Activated CD4-positive, alpha-beta memory T cell treated with anti-CD3 and anti-CD28 coated beads for 36 hours (primary cell): ENCODE measurements at regions of chr11 and their contacts with region 1.

Region 1: GRCh38 chr11:5123802-5124521 is 14.2 kb downstream of the OR52A5 start:
- DNase-seq: peak; percentile 62
- H3K4me3 Mint-ChIP-seq: no peak overlapping the region
- H3K27ac Mint-ChIP-seq: no peak overlapping the region
- H3K4me1 Mint-ChIP-seq: no peaks in the 10 kb centered on the region
- H3K27me3 Mint-ChIP-seq: peaks cover 8% of the 10 kb centered on the region

Region 2: DNA sequence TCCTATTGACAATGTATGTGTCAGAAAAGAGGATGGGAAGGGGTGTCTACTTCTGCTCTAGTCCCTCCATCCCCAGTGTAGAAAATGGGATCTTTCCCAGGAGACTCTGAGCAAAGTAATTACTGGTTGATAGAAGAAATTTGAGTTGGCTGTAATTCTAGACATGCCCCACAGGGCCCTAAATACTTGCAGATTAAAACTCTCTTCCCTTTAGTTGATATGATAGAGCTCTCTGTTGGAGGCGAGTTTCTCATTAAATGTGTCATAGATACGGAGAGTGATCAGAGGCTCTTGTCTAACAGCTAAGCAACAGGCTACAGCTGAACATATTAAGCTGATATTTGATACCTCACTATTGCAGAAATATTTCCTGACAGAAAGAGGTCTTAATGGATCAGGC is 21.7 kb before region 1 on chr11:
- CTCF ChIA-PET with region 1: no interaction called
- POLR2A ChIA-PET with region 1: no interaction called
- intact Hi-C with region 1: no loop called
- DNase-seq: no peak
- H3K4me3 Mint-ChIP-seq: no peak overlapping the region
- H3K27ac Mint-ChIP-seq: no peak overlapping the region
- H3K4me1 Mint-ChIP-seq: no peaks in the 10 kb centered on the region
- H3K27me3 Mint-ChIP-seq: peaks cover 5% of the 10 kb centered on the region

Region 3: GRCh38 chr11:5291207-5291838 is 167.4 kb after region 1 on chr11:
- CTCF ChIA-PET with region 1: interaction called, 7 read pairs
- POLR2A ChIA-PET with region 1: no interaction called
- intact Hi-C with region 1: loop called (anchors 2 kb)
- DNase-seq: no peak
- H3K4me3 Mint-ChIP-seq: no peak overlapping the region
- H3K27ac Mint-ChIP-seq: no peak overlapping the region
- H3K4me1 Mint-ChIP-seq: no peaks in the 10 kb centered on the region
- H3K27me3 Mint-ChIP-seq: peaks cover 2% of the 10 kb centered on the region

Region 4: GRCh38 chr11:5380740-5381342 is 256.9 kb after region 1 on chr11:
- CTCF ChIA-PET with region 1: interaction called, 4 read pairs
- POLR2A ChIA-PET with region 1: no interaction called
- intact Hi-C with region 1: loop called (anchors 1 kb)
- DNase-seq: peak; percentile 40
- H3K4me3 Mint-ChIP-seq: no peak overlapping the region
- H3K27ac Mint-ChIP-seq: no peak overlapping the region
- H3K4me1 Mint-ChIP-seq: no peaks in the 10 kb centered on the region
- H3K27me3 Mint-ChIP-seq: no peaks in the 10 kb centered on the region

Region 5: GRCh38 chr11:5514841-5515240 is 390.9 kb after region 1 on chr11:
- CTCF ChIA-PET with region 1: no interaction called
- POLR2A ChIA-PET with region 1: no interaction called
- intact Hi-C with region 1: no loop called
- DNase-seq: no peak
- H3K4me3 Mint-ChIP-seq: no peak overlapping the region
- H3K27ac Mint-ChIP-seq: no peak overlapping the region
- H3K4me1 Mint-ChIP-seq: no peaks in the 10 kb centered on the region
- H3K27me3 Mint-ChIP-seq: no peaks in the 10 kb centered on the region

Region 6: GRCh38 chr11:5891216-5891800 is 767.3 kb after region 1 on chr11:
- CTCF ChIA-PET with region 1: interaction called, 13 read pairs
- POLR2A ChIA-PET with region 1: no interaction called
- intact Hi-C with region 1: no loop called
- DNase-seq: no peak
- H3K4me3 Mint-ChIP-seq: no peak overlapping the region
- H3K27ac Mint-ChIP-seq: no peak overlapping the region
- H3K4me1 Mint-ChIP-seq: no peaks in the 10 kb centered on the region
- H3K27me3 Mint-ChIP-seq: peaks cover 2% of the 10 kb centered on the region